Gastrocnemius medialis (tissue), 4 donors: ENCODE measurements at regions of chr7 and their contacts with region 1.

Region 1: DNA sequence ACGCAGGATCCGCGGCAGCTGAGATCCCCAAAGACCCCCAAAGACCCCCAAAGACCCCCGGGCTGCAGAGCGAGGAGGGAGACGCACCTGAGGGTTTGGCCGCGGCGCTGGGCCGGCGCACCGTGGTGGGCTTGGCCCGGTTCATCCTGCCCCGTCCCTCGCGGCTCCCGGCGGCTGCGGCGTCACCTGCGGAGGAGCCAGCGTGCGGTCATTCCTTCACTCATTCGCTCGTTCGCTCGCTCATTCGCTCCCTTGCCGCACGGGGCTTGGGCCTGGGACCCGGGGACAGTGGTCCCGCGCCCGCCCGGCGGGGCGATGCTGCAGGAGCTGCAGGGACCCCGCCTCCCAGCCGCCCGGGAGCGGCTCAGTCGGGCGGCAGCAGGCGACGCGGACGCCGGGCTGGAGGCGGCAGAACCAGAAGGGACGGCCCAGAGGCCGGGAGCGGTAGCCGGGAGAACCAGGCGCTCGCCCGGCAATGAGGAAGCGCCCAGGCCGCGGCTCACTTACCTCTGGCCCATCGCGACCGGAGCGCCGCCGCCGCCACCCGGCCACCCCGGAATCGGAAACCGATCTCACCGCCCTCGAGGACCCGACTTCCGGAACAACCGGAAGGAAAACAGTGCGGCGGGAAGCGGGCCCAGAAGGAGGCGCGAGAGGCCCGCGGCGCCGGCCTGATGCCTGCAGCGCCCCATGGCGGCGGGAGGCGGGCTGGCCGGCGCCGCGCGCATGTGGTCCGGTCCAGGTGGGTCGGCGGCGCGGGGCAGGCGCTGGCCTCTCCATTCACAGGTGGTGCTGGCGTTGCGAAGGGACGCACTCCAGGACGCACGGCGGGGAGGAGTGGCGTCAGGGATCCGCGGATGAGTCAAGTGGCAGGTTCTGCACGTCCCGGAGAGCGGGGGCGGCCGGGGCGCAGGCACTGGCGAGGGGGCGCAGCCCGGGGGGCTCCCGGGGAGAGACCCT is at the start of gene INTS1:
- DNase-seq: peak; percentile 88 to 90
- ATAC-seq: peak; percentile 92 to 93
- H3K4me3 ChIP-seq: peak within 1 kb of the TSS; percentile 85 to 99 (median 92)
- H3K27ac ChIP-seq: peak within 1 kb of the TSS; percentile 48 to 91 (median 84)
- H3K4me1 ChIP-seq: peaks cover 13 to 21% of the 10 kb centered on the region in 2 donors
- H3K27me3 ChIP-seq: no peaks in the 10 kb centered on the region
- CTCF ChIP-seq: peak in 4 of 5 experiments; percentile 95 to 99 (median 98)
- POLR2A ChIP-seq: peak; percentile 54 to 58
- total RNA-seq, gene INTS1: 44.3 to 108 (median 78.8) TPM

Region 2: GRCh38 chr7:1459522-1459892 is 44.6 kb before region 1 on chr7:
- in situ Hi-C with region 1: no loop called
- intact Hi-C with region 1: loop called (anchors 5 kb)
- DNase-seq: peak; percentile 99 to 100
- ATAC-seq: peak; percentile 82
- H3K4me3 ChIP-seq: peak overlapping the region; percentile 66 to 91 (median 70)
- H3K27ac ChIP-seq: peak overlapping the region; percentile 84 to 90 (median 88)
- H3K4me1 ChIP-seq: peaks cover 23 to 27% of the 10 kb centered on the region in 2 donors
- H3K27me3 ChIP-seq: no peaks in the 10 kb centered on the region
- CTCF ChIP-seq: no peak
- POLR2A ChIP-seq: no peak

Region 3: GRCh38 chr7:1532483-1533424 is 28.7 kb after region 1 on chr7:
- in situ Hi-C with region 1: no loop called
- intact Hi-C with region 1: loop called (anchors 1 kb)
- DNase-seq: peak; percentile 81 to 83
- ATAC-seq: peak; percentile 48 to 55
- H3K4me3 ChIP-seq: peak overlapping the region; percentile 65 to 78 (median 70)
- H3K27ac ChIP-seq: peak overlapping the region; percentile 98 to 100 (median 99)
- H3K4me1 ChIP-seq: peaks cover 52 to 53% of the 10 kb centered on the region in 2 donors
- H3K27me3 ChIP-seq: no peaks in the 10 kb centered on the region
- CTCF ChIP-seq: no peak
- POLR2A ChIP-seq: peak; percentile 61 to 83

Region 4: DNA sequence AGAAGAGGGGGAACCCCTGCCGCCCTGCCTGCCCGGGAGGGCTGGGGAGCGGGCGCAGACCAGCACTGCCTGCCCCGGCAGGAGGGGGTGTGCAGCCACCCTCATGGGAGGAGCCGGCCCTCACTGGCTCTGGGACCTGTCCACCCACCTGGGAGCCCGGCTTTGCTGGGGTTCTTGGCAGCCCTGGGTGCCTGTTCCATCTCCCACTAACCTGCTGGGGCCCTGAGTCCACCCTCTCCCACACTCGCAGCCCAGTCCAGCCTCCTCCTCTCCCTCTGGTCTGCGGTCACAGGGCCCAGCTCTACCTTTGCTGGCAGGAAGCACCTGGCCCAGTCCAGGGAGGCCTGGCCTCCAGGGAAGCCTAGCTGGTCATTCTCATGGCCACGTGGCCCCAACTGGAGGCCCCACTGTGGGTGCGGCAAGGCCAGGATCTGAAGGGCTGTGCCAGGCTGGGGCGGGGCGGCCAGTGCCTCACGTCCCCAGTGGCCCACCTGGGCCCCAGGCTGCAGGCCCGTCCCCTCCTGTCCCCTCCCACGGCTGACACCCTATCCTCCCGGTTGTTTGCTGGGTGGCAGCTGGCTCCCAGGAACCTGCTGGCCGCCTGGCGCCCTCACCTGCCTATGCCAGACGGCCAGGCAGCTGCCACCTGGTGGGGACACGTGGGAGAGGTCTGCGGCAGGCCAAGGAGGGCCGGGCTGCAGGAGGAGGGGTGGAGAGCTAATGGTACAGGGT is 51.9 kb after region 1 on chr7 and contains the start of gene TMEM184A:
- in situ Hi-C with region 1: no loop called
- intact Hi-C with region 1: loop called (anchors 1 kb)
- DNase-seq: peak; percentile 78 to 90
- ATAC-seq: peak; percentile 70 to 79
- H3K4me3 ChIP-seq: peak within 1 kb of the TSS in 1 of 4 donors; percentile 10
- H3K27ac ChIP-seq: peak within 1 kb of the TSS; percentile 75 to 90 (median 84)
- H3K4me1 ChIP-seq: peaks cover 12 to 17% of the 10 kb centered on the region in 2 donors
- H3K27me3 ChIP-seq: no peaks in the 10 kb centered on the region
- CTCF ChIP-seq: peak; percentile 49 to 74 (median 67)
- POLR2A ChIP-seq: no peak
- total RNA-seq, gene TMEM184A: 0.55 to 3.3 (median 1.3) TPM

Region 5: GRCh38 chr7:1569833-1570633 is 65.9 kb after region 1 on chr7 and contains the start of gene PSMG3:
- in situ Hi-C with region 1: no loop called
- intact Hi-C with region 1: loop called (anchors 1 kb)
- DNase-seq: peak; percentile 86 to 87
- ATAC-seq: peak; percentile 83 to 84
- H3K4me3 ChIP-seq: peak within 1 kb of the TSS; percentile 77 to 98 (median 90)
- H3K27ac ChIP-seq: peak within 1 kb of the TSS; percentile 93 to 99 (median 94)
- H3K4me1 ChIP-seq: peaks cover 26 to 42% of the 10 kb centered on the region in 2 donors
- H3K27me3 ChIP-seq: no peaks in the 10 kb centered on the region
- CTCF ChIP-seq: peak; percentile 28 to 53 (median 37)
- POLR2A ChIP-seq: peak; percentile 82 to 85
- total RNA-seq, gene PSMG3: 25.4 to 46.4 (median 32.2) TPM